ENCODE measurements at regions of chr14 and their contacts with region 1.

Region 1: GRCh38 chr14:24241829-24242443 is 487 bp downstream of the TINF2 start:
- DNase-seq: peak; percentile 95
- H3K4me3 ChIP-seq: peak overlapping the region; percentile 54 to 78 (median 59)
- H3K27ac ChIP-seq: peak overlapping the region; percentile 97 to 100 (median 98)
- H3K4me1 ChIP-seq: peaks cover 28 to 40% (median 30%) of the 10 kb centered on the region in 4 donors
- H3K27me3 ChIP-seq: no peaks in the 10 kb centered on the region
- CTCF ChIP-seq: peak; percentile 63 to 88 (median 67)
- EP300 ChIP-seq: no peak
- POLR2A ChIP-seq: no peak

Region 2: GRCh38 chr14:24289649-24290249 is 47.8 kb after region 1 on chr14:
- in situ Hi-C with region 1: loop called in 1 of 4 experiments (anchors 5 kb)
- intact Hi-C with region 1: no loop called
- DNase-seq: no peak
- H3K4me3 ChIP-seq: no peak overlapping the region
- H3K27ac ChIP-seq: no peak overlapping the region
- H3K4me1 ChIP-seq: no peaks in the 10 kb centered on the region
- H3K27me3 ChIP-seq: no peaks in the 10 kb centered on the region
- CTCF ChIP-seq: no peak
- EP300 ChIP-seq: no peak
- POLR2A ChIP-seq: no peak

Region 3: GRCh38 chr14:24299255-24300195 is 57.6 kb after region 1 on chr14 and contains the starts of genes DHRS1 and NOP9:
- in situ Hi-C with region 1: loop called in 2 of 4 experiments (anchors 5 kb)
- intact Hi-C with region 1: no loop called
- DNase-seq: peak; percentile 96
- H3K4me3 ChIP-seq: peak within 1 kb of the TSS; percentile 72 to 96 (median 84)
- H3K27ac ChIP-seq: peak within 1 kb of the TSS; percentile 89 to 94 (median 92)
- H3K4me1 ChIP-seq: peaks cover 18 to 43% (median 24%) of the 10 kb centered on the region in 4 donors
- H3K27me3 ChIP-seq: no peaks in the 10 kb centered on the region
- CTCF ChIP-seq: no peak
- EP300 ChIP-seq: no peak
- POLR2A ChIP-seq: peak; percentile 86
- total RNA-seq, gene DHRS1: 84.2 to 106 (median 94.6) TPM
- total RNA-seq, gene NOP9: 18.8 to 20.9 (median 19.3) TPM

Measured in transverse colon (tissue), 4 donors.